CD8-positive, alpha-beta T cell (primary cell): ENCODE measurements at regions of chr4 and their contacts with region 1.

Region 1: GRCh38 chr4:99405433-99406115 is 29.6 kb downstream of the ADH7 start:
- DNase-seq: peak; percentile 34 to 71 (median 56)
- ATAC-seq: peak; percentile 70
- H3K4me3 ChIP-seq: no peak overlapping the region
- H3K4me3 Mint-ChIP-seq: no peak overlapping the region
- H3K27ac ChIP-seq: no peak overlapping the region
- H3K27ac Mint-ChIP-seq: no peak overlapping the region
- H3K4me1 ChIP-seq: no peaks in the 10 kb centered on the region
- H3K4me1 Mint-ChIP-seq: no peaks in the 10 kb centered on the region
- H3K27me3 ChIP-seq: no peaks in the 10 kb centered on the region
- H3K27me3 Mint-ChIP-seq: no peaks in the 10 kb centered on the region
- CTCF ChIP-seq: peak; percentile 93

Region 2: DNA sequence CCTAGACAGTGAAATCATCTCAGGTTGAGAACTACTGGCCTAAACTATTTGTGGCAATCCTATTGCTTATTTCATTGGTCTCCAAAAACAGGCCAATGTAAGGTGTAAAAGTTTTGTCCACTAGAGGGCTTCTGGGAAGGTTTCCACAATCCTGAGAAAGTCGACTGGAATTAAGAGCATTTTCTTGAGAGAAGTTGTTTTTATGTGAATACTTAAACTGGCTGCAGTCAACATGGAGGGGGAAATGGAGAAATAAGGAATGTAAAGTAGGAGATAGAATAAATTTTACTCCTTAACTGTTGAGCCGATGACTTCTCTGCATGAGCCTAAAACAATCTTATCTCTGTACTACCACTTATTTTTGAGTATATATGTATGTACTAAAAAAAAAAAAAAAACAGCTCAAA is 465.7 kb before region 1 on chr4:
- CTCF ChIA-PET with region 1: interaction called, 3 read pairs
- POLR2A ChIA-PET with region 1: no interaction called
- intact Hi-C with region 1: loop called in 1 of 2 experiments (anchors 5 kb)
- DNase-seq: peak in 2 of 9 experiments; percentile 39 to 51
- ATAC-seq: no peak
- H3K4me3 ChIP-seq: no peak overlapping the region
- H3K4me3 Mint-ChIP-seq: no peak overlapping the region
- H3K27ac ChIP-seq: no peak overlapping the region
- H3K27ac Mint-ChIP-seq: no peak overlapping the region
- H3K4me1 ChIP-seq: peaks cover 5% of the 10 kb centered on the region
- H3K4me1 Mint-ChIP-seq: peaks cover 7% of the 10 kb centered on the region
- H3K27me3 ChIP-seq: no peaks in the 10 kb centered on the region
- H3K27me3 Mint-ChIP-seq: no peaks in the 10 kb centered on the region
- CTCF ChIP-seq: peak; percentile 64

Region 3: DNA sequence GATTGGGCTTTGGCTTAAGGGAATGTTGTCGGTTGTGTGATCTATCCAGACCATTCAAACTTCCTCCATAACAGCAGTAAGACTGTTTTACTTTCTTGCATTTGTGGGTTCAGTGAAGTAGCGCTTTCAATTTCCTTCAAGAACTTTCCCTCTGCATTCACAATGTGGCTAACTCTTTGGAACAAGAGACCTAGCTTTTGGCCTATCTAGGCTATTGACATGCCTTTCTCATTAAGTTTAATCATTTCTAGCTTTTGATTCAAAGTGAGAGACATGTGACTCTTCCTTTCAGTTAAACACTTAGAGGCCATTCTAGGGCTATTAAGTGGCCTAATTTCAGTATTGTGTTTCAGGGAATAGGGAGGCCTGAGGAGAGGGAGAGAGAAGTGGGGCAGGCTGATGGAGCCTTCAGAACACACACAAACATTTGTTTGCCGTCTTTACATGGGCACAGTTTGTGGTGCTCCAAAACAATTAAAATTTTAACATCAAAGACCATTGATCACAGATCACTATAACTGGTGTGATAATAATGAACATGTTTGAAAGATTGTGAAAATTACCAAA is 351.1 kb before region 1 on chr4:
- CTCF ChIA-PET with region 1: interaction called, 5 read pairs
- POLR2A ChIA-PET with region 1: no interaction called
- intact Hi-C with region 1: loop called in 1 of 2 experiments (anchors 1 kb)
- DNase-seq: no peak
- ATAC-seq: no peak
- H3K4me3 ChIP-seq: no peak overlapping the region
- H3K4me3 Mint-ChIP-seq: no peak overlapping the region
- H3K27ac ChIP-seq: peak overlapping the region in 1 of 2 experiments; percentile 15
- H3K27ac Mint-ChIP-seq: peak overlapping the region; percentile 42
- H3K4me1 ChIP-seq: peaks cover 3% of the 10 kb centered on the region
- H3K4me1 Mint-ChIP-seq: peaks cover 7% of the 10 kb centered on the region
- H3K27me3 ChIP-seq: no peaks in the 10 kb centered on the region
- H3K27me3 Mint-ChIP-seq: no peaks in the 10 kb centered on the region
- CTCF ChIP-seq: no peak

Region 4: GRCh38 chr4:99165745-99166362 is 239.7 kb before region 1 on chr4:
- CTCF ChIA-PET with region 1: no interaction called
- POLR2A ChIA-PET with region 1: no interaction called
- intact Hi-C with region 1: no loop called
- DNase-seq: no peak
- ATAC-seq: no peak
- H3K4me3 ChIP-seq: no peak overlapping the region
- H3K4me3 Mint-ChIP-seq: no peak overlapping the region
- H3K27ac ChIP-seq: no peak overlapping the region
- H3K27ac Mint-ChIP-seq: no peak overlapping the region
- H3K4me1 ChIP-seq: no peaks in the 10 kb centered on the region
- H3K4me1 Mint-ChIP-seq: no peaks in the 10 kb centered on the region
- H3K27me3 ChIP-seq: no peaks in the 10 kb centered on the region
- H3K27me3 Mint-ChIP-seq: no peaks in the 10 kb centered on the region
- CTCF ChIP-seq: no peak